ENCODE measurements at regions of chr9 and their contacts with region 1.

Region 1: DNA sequence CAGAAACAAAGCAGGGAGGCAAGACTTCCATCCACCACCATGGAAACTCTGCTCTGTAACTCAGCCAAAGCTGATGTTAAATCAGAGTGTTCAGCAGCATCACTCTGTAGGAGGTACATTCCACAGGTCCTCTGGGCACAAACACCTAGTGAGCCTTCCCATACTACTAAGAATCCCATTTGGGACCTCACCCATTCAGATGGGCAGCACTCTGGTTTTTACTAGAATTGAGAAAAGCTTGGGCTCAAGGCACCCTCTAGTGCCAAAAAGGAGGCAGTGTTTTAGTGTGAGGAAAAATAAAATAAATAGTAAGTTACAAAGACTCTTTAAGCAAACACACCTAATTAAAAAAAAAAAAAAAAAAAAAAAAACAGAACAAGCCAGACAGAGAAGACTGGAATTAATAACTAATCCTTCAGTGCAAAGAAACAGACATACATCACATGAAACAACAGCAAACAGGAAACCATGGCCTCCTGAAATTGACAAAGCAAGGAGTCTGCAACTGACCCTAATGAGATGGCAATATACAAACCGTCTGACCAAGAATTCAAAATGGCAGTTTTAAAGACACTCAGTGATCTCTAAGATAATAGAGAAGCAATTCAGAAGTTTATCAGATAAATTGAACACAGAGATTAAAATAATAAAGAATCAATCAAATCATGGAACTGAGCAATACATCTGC is 159.5 kb downstream of the GNA14 start:
- DNase-seq: peak; percentile 44
- ATAC-seq: peak; percentile 54
- H3K4me3 ChIP-seq: no peak overlapping the region
- H3K27ac ChIP-seq: no peak overlapping the region
- H3K4me1 ChIP-seq: peaks cover 9% of the 10 kb centered on the region; the same call in 1 of the 2 replicates
- H3K27me3 ChIP-seq: no peaks in the 10 kb centered on the region
- CTCF ChIP-seq: peak; percentile 61

Region 2: GRCh38 chr9:77433675-77434445 is 54.7 kb before region 1 on chr9:
- CTCF ChIA-PET with region 1: interaction called, 6 read pairs
- POLR2A ChIA-PET with region 1: no interaction called
- intact Hi-C with region 1: loop called (anchors 2 kb)
- DNase-seq: peak; percentile 64
- ATAC-seq: peak; percentile 98
- H3K4me3 ChIP-seq: no peak overlapping the region
- H3K27ac ChIP-seq: no peak overlapping the region
- H3K4me1 ChIP-seq: no peaks in the 10 kb centered on the region
- H3K27me3 ChIP-seq: no peaks in the 10 kb centered on the region
- CTCF ChIP-seq: peak; percentile 94

Region 3: GRCh38 chr9:77456829-77457437 is 31.6 kb before region 1 on chr9:
- CTCF ChIA-PET with region 1: no interaction called
- POLR2A ChIA-PET with region 1: no interaction called
- intact Hi-C with region 1: loop called (anchors 2 kb)
- DNase-seq: peak; percentile 93
- ATAC-seq: peak; percentile 73
- H3K4me3 ChIP-seq: no peak overlapping the region
- H3K27ac ChIP-seq: no peak overlapping the region
- H3K4me1 ChIP-seq: no peaks in the 10 kb centered on the region; the same call in 1 of the 2 replicates
- H3K27me3 ChIP-seq: no peaks in the 10 kb centered on the region
- CTCF ChIP-seq: peak; percentile 74